Caco-2 (cell line): ENCODE measurements at regions of chr3 and their contacts with region 1.

Region 1: GRCh38 chr3:129650256-129650872 is 43.9 kb upstream of the PLXND1 start:
- DNase-seq: peak; percentile 74 to 77
- H3K4me3 ChIP-seq: no peak overlapping the region
- H3K4me3 Mint-ChIP-seq: peak overlapping the region; percentile 29
- H3K27ac Mint-ChIP-seq: peak overlapping the region; percentile 33
- H3K4me1 ChIP-seq: peaks cover 27% of the 10 kb centered on the region
- H3K4me1 Mint-ChIP-seq: peaks cover 18% of the 10 kb centered on the region
- H3K27me3 ChIP-seq: no peaks in the 10 kb centered on the region
- H3K27me3 Mint-ChIP-seq: no peaks in the 10 kb centered on the region
- CTCF ChIP-seq: peak; percentile 67 to 68

Region 2: GRCh38 chr3:129694256-129694655 is 43.9 kb after region 1 on chr3:
- CTCF ChIA-PET with region 1: no interaction called
- POLR2A ChIA-PET with region 1: no interaction called
- intact Hi-C with region 1: loop called (anchors 1 kb)
- DNase-seq: peak; percentile 79 to 86
- H3K4me3 ChIP-seq: no peak overlapping the region
- H3K4me3 Mint-ChIP-seq: peak overlapping the region; percentile 48
- H3K27ac Mint-ChIP-seq: peak overlapping the region; percentile 94
- H3K4me1 ChIP-seq: peaks cover 36% of the 10 kb centered on the region
- H3K4me1 Mint-ChIP-seq: peaks cover 45% of the 10 kb centered on the region
- H3K27me3 ChIP-seq: no peaks in the 10 kb centered on the region
- H3K27me3 Mint-ChIP-seq: no peaks in the 10 kb centered on the region
- CTCF ChIP-seq: no peak

Region 3: DNA sequence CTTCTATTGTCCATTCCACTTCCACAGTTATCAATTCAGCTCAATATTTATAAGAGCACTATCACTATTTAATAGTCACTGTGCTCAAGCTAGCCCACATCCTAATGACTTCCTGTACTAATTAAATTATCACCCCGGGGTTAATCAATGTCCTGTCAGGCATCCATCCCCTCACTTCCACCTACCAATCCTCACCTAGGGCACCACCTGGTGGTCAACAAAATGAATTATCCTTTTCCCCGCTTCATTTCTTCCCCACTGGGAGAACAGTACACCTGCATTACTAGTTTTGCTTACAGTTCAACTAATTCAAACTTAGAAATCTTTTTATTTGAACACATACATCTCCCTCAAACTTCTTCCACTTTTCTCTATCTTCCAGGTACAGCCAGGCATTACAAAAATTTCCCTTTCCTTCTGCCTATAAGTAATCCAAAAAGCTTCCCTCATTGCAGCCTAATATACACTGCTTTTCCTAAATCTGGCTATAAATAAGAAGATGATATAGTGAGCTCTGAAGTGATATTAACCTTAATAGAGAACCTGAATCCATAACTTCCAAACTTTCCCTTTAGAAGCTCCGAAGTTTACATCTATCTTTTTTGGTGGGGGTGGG is 174.7 kb after region 1 on chr3:
- CTCF ChIA-PET with region 1: interaction called, 5 read pairs
- POLR2A ChIA-PET with region 1: no interaction called
- intact Hi-C with region 1: loop called (anchors 1 kb)
- DNase-seq: peak; percentile 47 to 72
- H3K4me3 ChIP-seq: no peak overlapping the region
- H3K4me3 Mint-ChIP-seq: no peak overlapping the region
- H3K27ac Mint-ChIP-seq: no peak overlapping the region
- H3K4me1 ChIP-seq: peaks cover 12% of the 10 kb centered on the region; the same call in 1 of the 2 replicates
- H3K4me1 Mint-ChIP-seq: peaks cover 14% of the 10 kb centered on the region
- H3K27me3 ChIP-seq: no peaks in the 10 kb centered on the region
- H3K27me3 Mint-ChIP-seq: no peaks in the 10 kb centered on the region
- CTCF ChIP-seq: peak; percentile 58 to 77